IMR-90 (cell line): ENCODE measurements at regions of chr12 and their contacts with region 1.

Region 1: DNA sequence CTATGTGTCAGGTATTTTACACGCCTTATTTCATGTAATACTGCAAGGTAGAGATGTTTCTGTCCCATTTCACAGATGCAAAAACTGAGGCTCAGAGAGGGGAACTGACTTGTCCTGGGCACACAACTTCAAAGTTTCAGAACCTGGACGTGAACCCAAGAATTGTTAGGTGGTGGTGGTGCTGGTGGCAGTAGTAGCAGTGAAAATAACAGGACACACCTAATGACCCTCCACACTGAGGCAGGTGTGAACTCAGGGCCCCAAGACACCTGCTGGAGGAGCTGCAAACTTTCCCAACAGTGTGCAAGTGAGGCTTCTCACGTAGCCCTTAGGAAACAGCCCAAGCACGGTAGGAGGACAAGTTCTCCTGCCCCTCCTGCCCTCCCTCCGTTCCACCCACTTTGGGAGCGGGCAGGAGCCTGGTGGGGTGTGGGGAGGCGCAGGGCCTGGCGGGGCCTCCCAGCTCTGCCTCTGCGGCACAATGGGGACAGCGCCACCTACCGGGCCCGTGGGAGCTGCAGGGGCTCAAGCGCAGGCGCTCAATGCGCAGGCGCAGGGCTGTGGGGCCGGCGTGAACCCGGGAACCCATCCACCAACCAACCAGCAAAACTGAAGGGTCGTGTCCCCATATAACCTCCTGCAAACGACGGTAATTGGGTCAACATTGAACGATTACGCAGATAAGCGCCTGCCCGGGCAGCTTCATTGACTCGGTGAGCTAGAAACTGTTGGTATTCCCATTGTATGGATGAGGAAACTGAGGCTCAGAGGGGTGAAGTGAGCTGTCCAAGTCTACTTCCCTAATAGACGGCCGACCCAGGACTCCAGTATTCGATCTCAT is 12.0 kb upstream of the TRPV4 start:
- DNase-seq: peak; percentile 65
- ATAC-seq: peak; percentile 100
- H3K4me3 ChIP-seq: peak overlapping the region; percentile 33
- H3K27ac ChIP-seq: no peak overlapping the region
- H3K4me1 ChIP-seq: no peaks in the 10 kb centered on the region
- H3K27me3 ChIP-seq: no peaks in the 10 kb centered on the region; the same call in 1 of the 2 replicates
- CTCF ChIP-seq: peak; percentile 98
- POLR2A ChIP-seq: no peak
- RAD21 ChIP-seq: peak; percentile 91

Region 2: GRCh38 chr12:109518820-109519665 is 326.2 kb before region 1 on chr12:
- CTCF ChIA-PET with region 1: interaction called, 3 read pairs
- POLR2A ChIA-PET with region 1: no interaction called
- dilution Hi-C with region 1: no loop called
- in situ Hi-C with region 1: no loop called
- intact Hi-C with region 1: loop called (anchors 2 kb)
- DNase-seq: peak; percentile 92
- ATAC-seq: peak; percentile 91
- H3K4me3 ChIP-seq: no peak overlapping the region
- H3K27ac ChIP-seq: peak overlapping the region; percentile 67
- H3K4me1 ChIP-seq: peaks cover 7% of the 10 kb centered on the region
- H3K27me3 ChIP-seq: no peaks in the 10 kb centered on the region
- CTCF ChIP-seq: peak; percentile 84
- POLR2A ChIP-seq: no peak
- RAD21 ChIP-seq: peak; percentile 82

Region 3: GRCh38 chr12:109582658-109583057 is 262.5 kb before region 1 on chr12:
- CTCF ChIA-PET with region 1: no interaction called
- POLR2A ChIA-PET with region 1: no interaction called
- dilution Hi-C with region 1: no loop called
- in situ Hi-C with region 1: no loop called
- intact Hi-C with region 1: no loop called
- DNase-seq: no peak
- ATAC-seq: no peak
- H3K4me3 ChIP-seq: no peak overlapping the region
- H3K27ac ChIP-seq: no peak overlapping the region
- H3K4me1 ChIP-seq: no peaks in the 10 kb centered on the region
- H3K27me3 ChIP-seq: no peaks in the 10 kb centered on the region
- CTCF ChIP-seq: no peak
- POLR2A ChIP-seq: no peak
- RAD21 ChIP-seq: no peak

Region 4: DNA sequence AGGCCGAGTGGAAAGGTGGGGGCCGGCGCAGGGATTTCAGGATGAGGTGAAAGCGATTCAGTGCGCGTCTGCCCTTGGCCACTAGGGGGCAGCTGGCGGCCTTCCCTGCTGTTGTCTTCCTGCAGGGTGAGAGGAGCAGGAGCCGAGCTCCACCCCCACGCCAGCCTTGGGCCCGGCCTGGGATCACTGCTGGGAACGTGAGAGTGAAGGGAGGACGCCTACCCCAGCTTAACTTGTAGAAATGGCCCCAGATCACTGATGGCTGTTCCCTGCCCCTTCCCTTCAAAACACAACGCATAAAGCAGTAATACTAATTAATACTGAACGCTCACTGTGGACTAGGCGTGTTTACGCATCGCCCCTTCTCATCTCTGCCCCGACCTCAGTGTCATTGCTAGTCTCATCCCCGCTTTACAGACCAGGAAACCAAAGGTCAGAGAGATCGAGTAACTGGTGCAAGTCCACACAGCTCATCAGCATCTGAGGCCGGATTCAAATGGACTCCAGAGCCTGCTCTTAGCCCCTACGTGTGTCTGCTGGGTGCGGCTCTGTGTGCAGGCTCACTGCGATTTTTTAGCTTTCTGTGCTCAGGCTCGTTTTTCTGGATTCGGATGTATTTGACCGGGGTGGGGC is 247.3 kb before region 1 on chr12:
- CTCF ChIA-PET with region 1: interaction called, 6 read pairs
- POLR2A ChIA-PET with region 1: no interaction called
- dilution Hi-C with region 1: no loop called
- in situ Hi-C with region 1: no loop called
- intact Hi-C with region 1: loop called (anchors 2 kb)
- DNase-seq: peak; percentile 75
- ATAC-seq: peak; percentile 100
- H3K4me3 ChIP-seq: no peak overlapping the region
- H3K27ac ChIP-seq: no peak overlapping the region
- H3K4me1 ChIP-seq: peaks cover 2% of the 10 kb centered on the region; the same call in 1 of the 2 replicates
- H3K27me3 ChIP-seq: peaks cover 5% of the 10 kb centered on the region; the same call in 1 of the 2 replicates
- CTCF ChIP-seq: peak; percentile 97
- POLR2A ChIP-seq: no peak
- RAD21 ChIP-seq: peak; percentile 86

Region 5: DNA sequence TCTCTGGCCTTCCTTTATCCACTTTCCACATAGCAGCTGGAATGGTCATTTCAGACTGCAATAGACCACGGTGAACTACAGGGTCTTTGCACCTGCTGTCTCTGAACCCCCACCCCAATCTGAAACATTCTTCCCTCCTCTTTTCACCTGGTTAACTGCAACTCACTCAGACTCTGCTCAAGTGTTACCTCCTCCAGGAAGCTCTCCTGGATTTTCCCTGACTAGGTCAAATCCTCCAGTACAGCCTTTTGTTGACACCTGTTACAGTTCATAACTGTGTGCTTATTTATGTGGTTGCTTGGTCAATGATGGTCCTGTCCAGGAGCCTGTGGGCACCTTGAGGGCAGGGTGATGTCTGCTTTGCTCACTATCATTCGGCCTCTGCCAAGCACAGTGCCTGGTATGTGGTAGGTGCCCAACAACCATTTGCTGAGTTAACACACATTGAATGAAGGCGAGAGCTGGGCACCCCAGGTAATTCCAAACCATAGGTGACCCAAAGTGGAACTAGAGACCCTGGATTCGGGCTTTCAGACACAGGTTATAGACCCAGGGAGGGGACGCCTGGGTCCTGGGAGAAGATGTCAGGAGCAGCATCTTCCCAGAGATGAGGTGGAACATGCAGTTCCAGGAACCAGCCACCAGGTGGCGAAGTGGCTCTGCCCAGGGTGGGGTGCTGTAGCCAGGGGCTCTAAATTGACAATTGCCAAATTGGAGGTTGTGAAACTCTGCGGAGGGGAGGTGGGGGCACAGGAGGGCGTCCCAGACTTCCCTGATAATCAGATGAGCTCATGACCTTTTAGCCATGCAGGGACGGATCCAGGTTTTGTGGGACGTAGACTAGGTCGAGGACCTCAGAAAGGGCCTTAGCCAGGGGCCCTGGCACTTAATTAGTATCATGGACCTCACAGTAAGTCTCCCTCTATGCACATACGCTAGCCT is 40.1 kb before region 1 on chr12:
- CTCF ChIA-PET with region 1: interaction called, 23 read pairs
- POLR2A ChIA-PET with region 1: no interaction called
- dilution Hi-C with region 1: no loop called
- in situ Hi-C with region 1: loop called (anchors 5 kb)
- intact Hi-C with region 1: loop called (anchors 1 kb)
- DNase-seq: peak; percentile 39
- ATAC-seq: peak; percentile 99
- H3K4me3 ChIP-seq: no peak overlapping the region
- H3K27ac ChIP-seq: no peak overlapping the region
- H3K4me1 ChIP-seq: no peaks in the 10 kb centered on the region
- H3K27me3 ChIP-seq: no peaks in the 10 kb centered on the region
- CTCF ChIP-seq: peak; percentile 89
- POLR2A ChIP-seq: no peak
- RAD21 ChIP-seq: peak; percentile 86

Region 6: GRCh38 chr12:109833307-109834189 is 11.7 kb before region 1 on chr12 and contains the start of gene TRPV4:
- CTCF ChIA-PET with region 1: interaction called, 11 read pairs
- POLR2A ChIA-PET with region 1: no interaction called
- dilution Hi-C with region 1: no loop called
- in situ Hi-C with region 1: no loop called
- intact Hi-C with region 1: no loop called
- DNase-seq: peak; percentile 23
- ATAC-seq: peak; percentile 87
- H3K4me3 ChIP-seq: peak within 1 kb of the TSS; percentile 52
- H3K27ac ChIP-seq: no peak within 1 kb of the TSS; the same call in 1 of the 2 replicates
- H3K4me1 ChIP-seq: peaks cover 2% of the 10 kb centered on the region; the same call in 1 of the 2 replicates
- H3K27me3 ChIP-seq: no peaks in the 10 kb centered on the region
- CTCF ChIP-seq: no peak
- POLR2A ChIP-seq: no peak
- RAD21 ChIP-seq: no peak
- total RNA-seq, gene TRPV4: 1.1 TPM in 2 replicates